Activated naive CD4-positive, alpha-beta T cell treated with anti-CD3 and anti-CD28 coated beads for 36 hours (primary cell): ENCODE measurements at regions of chr1 and their contacts with region 1.

Region 1: GRCh38 chr1:24201941-24202440 is 14.9 kb upstream of the IFNLR1 start:
- DNase-seq: peak; percentile 79
- H3K4me3 Mint-ChIP-seq: no peak overlapping the region
- H3K27ac Mint-ChIP-seq: no peak overlapping the region
- H3K4me1 Mint-ChIP-seq: peaks cover 13% of the 10 kb centered on the region
- H3K27me3 Mint-ChIP-seq: no peaks in the 10 kb centered on the region

Region 2: GRCh38 chr1:24070821-24071393 is 131.1 kb before region 1 on chr1:
- CTCF ChIA-PET with region 1: interaction called, 14 read pairs
- intact Hi-C with region 1: loop called (anchors 5 kb)
- DNase-seq: peak; percentile 87
- H3K4me3 Mint-ChIP-seq: no peak overlapping the region
- H3K27ac Mint-ChIP-seq: no peak overlapping the region
- H3K4me1 Mint-ChIP-seq: no peaks in the 10 kb centered on the region
- H3K27me3 Mint-ChIP-seq: no peaks in the 10 kb centered on the region

Region 3: DNA sequence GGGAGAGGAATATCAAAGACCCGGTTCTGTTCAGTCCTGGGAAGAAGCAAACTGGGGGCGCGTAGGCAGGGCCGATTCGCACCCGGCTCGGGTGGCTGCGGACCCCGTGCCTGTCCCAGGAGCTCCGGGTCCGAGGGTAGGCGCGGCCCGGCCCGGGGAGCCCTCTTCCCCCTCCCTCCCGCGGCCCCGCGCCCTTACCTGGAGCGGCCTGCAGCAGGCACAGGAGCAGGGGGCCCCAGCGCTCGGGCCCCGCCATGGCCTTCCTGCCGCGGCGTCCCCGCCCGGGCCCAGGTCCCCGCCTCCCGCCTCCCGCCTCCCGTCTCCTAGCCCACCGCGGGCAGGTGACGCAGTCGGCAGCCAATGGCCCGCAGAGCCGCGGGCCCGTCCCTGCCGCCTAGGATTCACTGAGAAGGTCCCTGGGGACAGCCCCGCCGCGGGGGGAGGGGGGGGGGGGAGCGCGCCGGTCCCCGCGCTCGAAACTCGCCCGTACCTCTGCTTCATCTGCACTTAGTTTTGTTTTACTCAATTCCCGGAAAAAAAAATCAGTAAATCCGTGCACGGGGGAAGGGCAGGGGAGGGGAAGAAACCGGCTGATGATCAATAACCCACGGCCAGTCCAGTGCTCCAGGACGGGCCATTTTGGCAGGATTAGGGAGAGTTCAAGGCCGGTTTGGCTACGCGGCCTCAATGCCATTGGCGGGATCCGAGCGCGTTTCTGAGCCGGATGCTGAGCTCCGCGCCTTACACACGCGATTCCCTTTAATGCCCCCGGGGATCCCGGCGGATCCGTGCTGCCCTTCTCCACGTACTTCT is 14.8 kb before region 1 on chr1 and contains the start of gene IFNLR1:
- CTCF ChIA-PET with region 1: interaction called, 28 read pairs
- intact Hi-C with region 1: no loop called
- DNase-seq: peak; percentile 92
- H3K4me3 Mint-ChIP-seq: peak within 1 kb of the TSS; percentile 79
- H3K27ac Mint-ChIP-seq: peak within 1 kb of the TSS; percentile 18
- H3K4me1 Mint-ChIP-seq: peaks cover 50% of the 10 kb centered on the region
- H3K27me3 Mint-ChIP-seq: peaks cover 3% of the 10 kb centered on the region
- total RNA-seq, gene IFNLR1: 4.3 to 4.6 TPM

Region 4: DNA sequence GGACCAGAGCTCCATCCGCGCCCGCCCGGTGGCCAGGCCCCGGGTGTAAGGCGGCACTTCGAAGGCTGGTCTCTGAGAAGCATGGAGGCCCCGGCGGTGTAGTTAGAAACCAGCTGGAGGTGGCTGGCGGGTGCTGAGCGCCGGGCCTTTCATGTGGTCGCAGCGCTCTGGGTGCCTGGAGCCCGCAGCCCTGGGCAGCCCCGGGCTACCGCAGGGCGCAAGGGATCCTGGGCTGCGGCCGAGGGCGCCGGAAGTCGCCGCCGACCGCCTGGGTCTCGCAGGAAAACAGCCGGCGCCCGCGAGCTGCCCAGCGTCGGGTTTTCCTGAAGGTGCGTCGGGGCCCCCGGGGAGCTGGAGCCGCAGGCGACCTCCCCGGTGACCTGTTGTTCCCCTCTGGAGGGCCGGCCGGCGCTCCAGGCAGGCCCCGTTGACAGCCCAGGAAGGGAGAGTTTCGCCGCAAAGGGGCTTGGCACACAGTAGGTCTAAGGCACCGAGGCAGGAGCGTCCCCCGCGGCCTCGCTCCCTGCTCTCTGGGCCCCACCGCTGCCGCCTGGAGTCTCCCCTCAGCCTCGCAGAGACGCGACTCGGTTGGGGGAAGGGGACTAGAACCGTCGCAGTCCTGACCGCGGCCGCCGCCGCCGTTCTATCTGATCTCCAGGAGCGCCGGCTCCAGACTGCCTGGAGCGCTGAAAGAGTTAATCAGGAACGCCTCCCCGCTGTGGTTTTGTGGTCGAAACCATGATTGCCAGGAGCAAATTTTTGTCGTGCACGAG is 119.9 kb after region 1 on chr1:
- CTCF ChIA-PET with region 1: interaction called, 11 read pairs
- intact Hi-C with region 1: loop called (anchors 1 kb)
- DNase-seq: peak; percentile 88
- H3K4me3 Mint-ChIP-seq: peak overlapping the region; percentile 67
- H3K27ac Mint-ChIP-seq: no peak overlapping the region
- H3K4me1 Mint-ChIP-seq: peaks cover 41% of the 10 kb centered on the region
- H3K27me3 Mint-ChIP-seq: peaks cover 73% of the 10 kb centered on the region

Region 5: GRCh38 chr1:24391882-24392603 is 190.1 kb after region 1 on chr1:
- CTCF ChIA-PET with region 1: interaction called, 304 read pairs
- intact Hi-C with region 1: loop called (anchors 1 kb)
- DNase-seq: peak; percentile 80
- H3K4me3 Mint-ChIP-seq: peak overlapping the region; percentile 60
- H3K27ac Mint-ChIP-seq: peak overlapping the region; percentile 86
- H3K4me1 Mint-ChIP-seq: peaks cover 47% of the 10 kb centered on the region
- H3K27me3 Mint-ChIP-seq: no peaks in the 10 kb centered on the region

Region 6: GRCh38 chr1:24586970-24587820 is 385.2 kb after region 1 on chr1:
- CTCF ChIA-PET with region 1: interaction called, 32 read pairs
- intact Hi-C with region 1: loop called (anchors 2 kb)
- DNase-seq: peak; percentile 71
- H3K4me3 Mint-ChIP-seq: peak overlapping the region; percentile 24
- H3K27ac Mint-ChIP-seq: peak overlapping the region; percentile 72
- H3K4me1 Mint-ChIP-seq: peaks cover 5% of the 10 kb centered on the region
- H3K27me3 Mint-ChIP-seq: no peaks in the 10 kb centered on the region

Region 7: DNA sequence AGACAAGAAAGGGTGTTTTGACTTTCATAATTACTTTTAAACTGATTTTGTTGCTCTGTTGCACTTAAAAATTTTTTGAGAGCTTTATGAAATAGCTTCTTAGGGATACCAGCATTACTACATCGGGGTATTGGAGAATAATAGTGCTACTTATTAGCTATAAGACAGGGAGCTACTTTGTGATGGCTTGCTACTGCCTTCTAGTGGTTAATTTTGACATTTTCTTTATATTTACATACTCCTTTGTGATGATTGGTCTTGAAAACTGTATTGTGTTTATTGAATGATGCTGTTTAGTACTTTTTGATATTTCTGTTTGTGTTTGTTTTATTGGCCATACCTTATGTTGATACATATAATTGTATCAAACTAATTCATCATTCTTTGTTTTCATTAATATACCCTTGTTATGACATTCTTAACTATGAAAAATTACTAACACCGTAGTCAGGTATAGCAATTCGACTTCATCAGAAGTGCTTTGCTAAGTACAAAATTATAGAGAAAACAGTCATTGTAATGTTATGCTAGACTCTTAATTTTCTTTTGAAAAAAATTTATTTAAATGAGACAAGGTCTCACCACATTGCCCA is 628.8 kb after region 1 on chr1:
- CTCF ChIA-PET with region 1: interaction called, 5 read pairs
- intact Hi-C with region 1: loop called (anchors 10 kb)
- DNase-seq: no peak
- H3K4me3 Mint-ChIP-seq: no peak overlapping the region
- H3K27ac Mint-ChIP-seq: no peak overlapping the region
- H3K4me1 Mint-ChIP-seq: no peaks in the 10 kb centered on the region
- H3K27me3 Mint-ChIP-seq: no peaks in the 10 kb centered on the region